ENCODE measurements at regions of chr2 and their contacts with region 1.

Region 1: DNA sequence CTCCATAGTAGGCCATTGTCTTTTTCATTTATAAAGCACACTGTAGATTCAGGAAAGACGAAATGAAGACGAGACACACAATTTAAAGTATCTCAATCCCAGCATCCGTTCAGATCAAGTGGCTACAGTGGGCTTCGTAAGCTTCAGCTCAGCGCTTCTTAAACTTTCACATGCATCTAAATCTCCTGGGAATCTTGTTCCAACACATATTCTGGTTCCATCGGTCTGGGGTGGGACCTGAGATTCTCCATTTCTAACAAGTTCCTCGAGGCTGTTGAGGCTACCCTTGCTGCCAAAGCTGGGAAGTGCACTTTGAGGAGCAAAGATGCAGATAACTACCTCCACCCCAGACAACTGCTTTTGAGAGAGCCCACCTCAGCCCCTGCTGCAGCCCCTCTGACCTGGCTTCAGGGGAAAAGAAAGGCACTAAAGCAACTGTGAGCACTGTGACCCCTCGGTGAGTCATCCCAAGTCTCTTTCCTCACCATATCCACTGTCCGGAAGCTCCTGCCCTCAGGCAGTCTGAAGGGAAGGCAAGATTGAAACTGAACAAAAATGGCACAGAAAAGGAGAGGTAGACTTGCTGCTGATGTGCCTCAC is 201.1 kb upstream of the FBXO11 start:
- DNase-seq: no peak
- H3K4me3 ChIP-seq: no peak overlapping the region
- H3K4me3 Mint-ChIP-seq: no peak overlapping the region
- H3K27ac ChIP-seq: no peak overlapping the region
- H3K27ac Mint-ChIP-seq: peak overlapping the region in 1 of 7 donors; percentile 71
- H3K4me1 ChIP-seq: peaks cover 20% of the 10 kb centered on the region
- H3K4me1 Mint-ChIP-seq: peaks cover 9 to 25% (median 17%) of the 10 kb centered on the region in 4 donors
- H3K27me3 ChIP-seq: no peaks in the 10 kb centered on the region
- H3K27me3 Mint-ChIP-seq: peaks cover 0 to 2% of the 10 kb centered on the region in 2 donors

Region 2: GRCh38 chr2:47520825-47521665 is 586.4 kb before region 1 on chr2:
- CTCF ChIA-PET with region 1: no interaction called
- POLR2A ChIA-PET with region 1: no interaction called
- intact Hi-C with region 1: loop called (anchors 5 kb)
- DNase-seq: peak; percentile 72 to 80 (median 78)
- H3K4me3 ChIP-seq: peak overlapping the region; percentile 23 to 81
- H3K4me3 Mint-ChIP-seq: peak overlapping the region; percentile 92 to 96 (median 94)
- H3K27ac ChIP-seq: peak overlapping the region; percentile 23
- H3K27ac Mint-ChIP-seq: peak overlapping the region; percentile 59 to 97 (median 93)
- H3K4me1 ChIP-seq: peaks cover 18% of the 10 kb centered on the region
- H3K4me1 Mint-ChIP-seq: peaks cover 10 to 31% (median 18%) of the 10 kb centered on the region in 4 donors
- H3K27me3 ChIP-seq: no peaks in the 10 kb centered on the region
- H3K27me3 Mint-ChIP-seq: peaks cover 0 to 1% of the 10 kb centered on the region in 2 donors

Region 3: GRCh38 chr2:47767880-47768609 is 339.4 kb before region 1 on chr2:
- CTCF ChIA-PET with region 1: interaction called, 9 read pairs
- POLR2A ChIA-PET with region 1: no interaction called
- intact Hi-C with region 1: loop called (anchors 1 kb)
- DNase-seq: peak; percentile 41 to 70 (median 56)
- H3K4me3 ChIP-seq: no peak overlapping the region
- H3K4me3 Mint-ChIP-seq: peak overlapping the region; percentile 41 to 78 (median 66)
- H3K27ac ChIP-seq: no peak overlapping the region
- H3K27ac Mint-ChIP-seq: no peak overlapping the region
- H3K4me1 ChIP-seq: peaks cover 8% of the 10 kb centered on the region
- H3K4me1 Mint-ChIP-seq: peaks cover 2 to 10% (median 4%) of the 10 kb centered on the region in 4 donors
- H3K27me3 ChIP-seq: no peaks in the 10 kb centered on the region
- H3K27me3 Mint-ChIP-seq: peaks cover 2 to 3% of the 10 kb centered on the region in 2 donors

Region 4: DNA sequence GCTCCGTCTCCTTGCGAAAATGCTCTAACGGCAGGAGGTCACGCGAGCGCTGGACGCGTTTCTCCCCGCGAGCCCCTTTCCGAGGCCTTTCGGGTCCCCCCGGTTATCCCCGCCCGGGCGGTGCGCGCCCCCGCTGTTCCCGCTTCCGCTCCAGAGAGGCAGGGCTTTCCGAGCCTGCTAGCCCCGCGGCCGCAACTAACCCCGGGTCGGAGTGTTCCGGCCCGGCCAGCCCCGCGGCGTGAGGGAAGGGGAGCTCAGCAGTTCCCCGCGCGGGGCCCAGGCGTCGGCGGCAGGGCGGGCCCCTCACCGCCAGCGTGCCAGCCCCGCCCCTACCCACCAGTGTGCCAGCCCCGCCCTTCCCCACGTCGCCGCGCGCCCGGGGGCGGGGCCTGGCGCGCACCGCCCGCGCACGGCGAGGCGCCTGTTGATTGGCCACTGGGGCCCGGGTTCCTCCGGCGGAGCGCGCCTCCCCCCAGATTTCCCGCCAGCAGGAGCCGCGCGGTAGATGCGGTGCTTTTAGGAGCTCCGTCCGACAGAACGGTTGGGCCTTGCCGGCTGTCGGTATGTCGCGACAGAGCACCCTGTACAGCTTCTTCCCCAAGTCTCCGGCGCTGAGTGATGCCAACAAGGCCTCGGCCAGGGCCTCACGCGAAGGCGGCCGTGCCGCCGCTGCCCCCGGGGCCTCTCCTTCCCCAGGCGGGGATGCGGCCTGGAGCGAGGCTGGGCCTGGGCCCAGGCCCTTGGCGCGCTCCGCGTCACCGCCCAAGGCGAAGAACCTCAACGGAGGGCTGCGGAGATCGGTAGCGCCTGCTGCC is 324.5 kb before region 1 on chr2 and contains the start of gene MSH6:
- CTCF ChIA-PET with region 1: no interaction called
- POLR2A ChIA-PET with region 1: no interaction called
- intact Hi-C with region 1: loop called (anchors 1 kb)
- DNase-seq: peak; percentile 87 to 93 (median 92)
- H3K4me3 ChIP-seq: peak within 1 kb of the TSS; percentile 78 to 99
- H3K4me3 Mint-ChIP-seq: peak within 1 kb of the TSS; percentile 90 to 94 (median 92)
- H3K27ac ChIP-seq: peak within 1 kb of the TSS; percentile 94
- H3K27ac Mint-ChIP-seq: peak within 1 kb of the TSS; percentile 84 to 94 (median 92)
- H3K4me1 ChIP-seq: peaks cover 36% of the 10 kb centered on the region
- H3K4me1 Mint-ChIP-seq: peaks cover 13 to 33% (median 23%) of the 10 kb centered on the region in 4 donors
- H3K27me3 ChIP-seq: no peaks in the 10 kb centered on the region
- H3K27me3 Mint-ChIP-seq: no peaks in the 10 kb centered on the region
- total RNA-seq, gene MSH6: 39.4 to 49.9 TPM

Region 5: DNA sequence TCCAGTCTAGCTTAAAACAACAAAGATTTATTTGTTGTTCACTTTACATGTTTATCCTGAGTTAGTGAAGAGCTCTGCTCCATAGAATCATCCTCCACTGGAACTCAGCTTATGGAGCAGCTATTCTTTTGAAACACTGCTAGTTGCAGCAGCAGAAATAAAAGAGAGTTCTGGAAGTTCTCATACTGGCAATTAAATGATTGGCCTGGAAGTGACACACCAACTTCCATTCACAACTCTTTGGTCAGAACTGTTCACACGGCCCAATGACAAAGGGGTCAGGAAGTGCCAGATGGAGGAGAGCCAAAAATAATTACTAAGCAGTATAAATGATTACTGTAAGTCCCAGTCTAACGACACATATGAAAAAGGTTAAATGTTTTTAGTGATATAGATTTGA is 240.2 kb before region 1 on chr2:
- CTCF ChIA-PET with region 1: interaction called, 11 read pairs
- POLR2A ChIA-PET with region 1: no interaction called
- intact Hi-C with region 1: no loop called
- DNase-seq: no peak
- H3K4me3 ChIP-seq: no peak overlapping the region
- H3K4me3 Mint-ChIP-seq: peak overlapping the region in 4 of 8 donors; percentile 13 to 64 (median 38)
- H3K27ac ChIP-seq: no peak overlapping the region
- H3K27ac Mint-ChIP-seq: peak overlapping the region in 4 of 7 donors; percentile 2 to 85 (median 42)
- H3K4me1 ChIP-seq: peaks cover 93% of the 10 kb centered on the region
- H3K4me1 Mint-ChIP-seq: peaks cover 60 to 90% (median 75%) of the 10 kb centered on the region in 4 donors
- H3K27me3 ChIP-seq: no peaks in the 10 kb centered on the region
- H3K27me3 Mint-ChIP-seq: no peaks in the 10 kb centered on the region

Region 6: GRCh38 chr2:48089644-48090043 is 17.8 kb before region 1 on chr2:
- CTCF ChIA-PET with region 1: interaction called, 21 read pairs
- POLR2A ChIA-PET with region 1: no interaction called
- intact Hi-C with region 1: no loop called
- DNase-seq: no peak
- H3K4me3 ChIP-seq: no peak overlapping the region
- H3K4me3 Mint-ChIP-seq: no peak overlapping the region
- H3K27ac ChIP-seq: no peak overlapping the region
- H3K27ac Mint-ChIP-seq: no peak overlapping the region
- H3K4me1 ChIP-seq: no peaks in the 10 kb centered on the region
- H3K4me1 Mint-ChIP-seq: no peaks in the 10 kb centered on the region
- H3K27me3 ChIP-seq: no peaks in the 10 kb centered on the region
- H3K27me3 Mint-ChIP-seq: no peaks in the 10 kb centered on the region

Region 7: GRCh38 chr2:48148841-48149430 is 41.5 kb after region 1 on chr2:
- CTCF ChIA-PET with region 1: no interaction called
- POLR2A ChIA-PET with region 1: no interaction called
- intact Hi-C with region 1: no loop called
- DNase-seq: no peak
- H3K4me3 ChIP-seq: no peak overlapping the region
- H3K4me3 Mint-ChIP-seq: peak overlapping the region in 2 of 8 donors; percentile 27 to 28
- H3K27ac ChIP-seq: no peak overlapping the region
- H3K27ac Mint-ChIP-seq: peak overlapping the region in 2 of 7 donors; percentile 44 to 68
- H3K4me1 ChIP-seq: peaks cover 15% of the 10 kb centered on the region
- H3K4me1 Mint-ChIP-seq: peaks cover 5 to 16% (median 15%) of the 10 kb centered on the region in 4 donors
- H3K27me3 ChIP-seq: no peaks in the 10 kb centered on the region
- H3K27me3 Mint-ChIP-seq: no peaks in the 10 kb centered on the region

Region 8: DNA sequence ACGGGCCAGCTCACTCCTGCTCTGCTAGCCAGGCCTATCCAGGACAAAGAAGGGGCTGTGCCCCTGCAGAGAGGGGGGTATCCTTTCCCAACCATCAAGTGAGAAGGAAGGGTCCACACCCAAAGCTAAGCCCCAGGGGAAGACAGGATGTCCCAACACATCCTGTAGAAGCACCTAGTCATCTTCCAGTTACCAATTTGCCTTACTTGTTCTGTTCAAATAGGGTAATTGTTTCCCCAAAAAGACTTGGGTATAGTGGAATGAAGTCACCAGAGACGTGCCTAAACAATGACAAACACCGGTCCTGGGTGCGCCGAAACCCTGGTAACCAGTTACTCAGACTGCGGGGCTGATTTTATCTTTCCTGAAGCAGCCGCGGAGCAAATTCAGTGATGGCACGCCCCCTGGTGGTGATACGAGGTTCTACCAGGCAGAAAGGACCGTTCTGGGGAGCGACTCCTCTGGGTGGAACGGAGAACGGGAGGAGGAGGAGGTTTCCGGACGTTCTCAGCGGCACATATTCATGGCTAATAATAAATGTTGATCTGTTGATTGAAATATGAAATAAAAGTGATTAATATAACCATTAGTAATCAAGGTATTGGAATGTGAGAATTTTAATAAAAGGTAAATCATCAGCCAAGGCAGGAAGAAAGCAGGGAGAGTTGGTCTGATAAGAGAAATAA is 313.2 kb after region 1 on chr2:
- CTCF ChIA-PET with region 1: interaction called, 56 read pairs
- POLR2A ChIA-PET with region 1: interaction called, 3 read pairs
- intact Hi-C with region 1: no loop called
- DNase-seq: peak; percentile 86 to 93 (median 88)
- H3K4me3 ChIP-seq: no peak overlapping the region
- H3K4me3 Mint-ChIP-seq: peak overlapping the region in 6 of 8 donors; percentile 53 to 74 (median 62)
- H3K27ac ChIP-seq: no peak overlapping the region
- H3K27ac Mint-ChIP-seq: peak overlapping the region; percentile 63 to 90 (median 86)
- H3K4me1 ChIP-seq: peaks cover 20% of the 10 kb centered on the region
- H3K4me1 Mint-ChIP-seq: peaks cover 19 to 31% (median 20%) of the 10 kb centered on the region in 4 donors
- H3K27me3 ChIP-seq: no peaks in the 10 kb centered on the region
- H3K27me3 Mint-ChIP-seq: peaks cover 2% of the 10 kb centered on the region in 2 donors

Measured in CD4-positive, alpha-beta memory T cell (primary cell).